ENCODE measurements at regions of chr3 and their contacts with region 1.

Region 1: DNA sequence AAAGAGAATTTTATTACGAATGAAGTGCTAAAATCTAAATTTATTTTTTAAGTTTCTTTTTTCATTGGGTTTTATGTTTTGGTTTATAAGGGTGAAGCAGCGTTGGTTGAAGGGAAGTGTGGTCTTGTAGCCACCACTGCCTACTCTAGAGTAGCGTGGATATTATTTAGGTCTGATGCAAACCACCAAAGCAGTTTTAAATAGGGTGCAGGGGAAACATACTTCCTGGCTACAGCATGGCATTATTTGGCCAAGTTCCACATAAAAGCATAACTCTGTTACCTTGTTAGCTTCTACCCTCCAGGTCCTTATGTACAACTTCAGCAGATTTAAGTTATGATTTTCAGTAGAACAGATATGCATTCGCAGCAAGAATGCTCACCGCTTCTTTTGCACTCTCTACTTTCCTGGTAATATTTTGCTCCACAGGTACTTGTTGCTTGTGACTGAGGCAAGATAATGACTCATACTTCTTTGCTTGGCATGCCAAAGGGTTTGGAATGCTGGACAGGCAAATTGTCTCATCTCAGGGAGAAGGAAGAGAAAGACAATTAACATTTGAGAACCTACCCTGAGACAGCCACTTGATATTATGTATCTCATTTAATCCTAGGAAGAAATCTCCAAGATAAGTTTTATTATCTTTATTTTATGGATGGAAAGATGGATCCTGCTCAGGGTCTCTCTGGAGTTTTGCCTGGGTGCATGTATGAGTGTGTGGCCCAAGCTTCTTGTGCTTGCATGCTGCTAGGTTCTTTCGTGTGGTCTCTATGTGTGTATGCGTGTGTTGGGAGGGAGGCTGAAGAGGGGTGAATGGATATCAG is 5.4 kb downstream of the TGFBR2 start:
- DNase-seq: no peak
- ATAC-seq: peak; percentile 49
- H3K4me3 ChIP-seq: peak overlapping the region; percentile 92
- H3K4me3 Mint-ChIP-seq: peak overlapping the region; percentile 88 to 100 (median 95)
- H3K27ac ChIP-seq: peak overlapping the region; percentile 79
- H3K27ac Mint-ChIP-seq: peak overlapping the region; percentile 87 to 99 (median 95)
- H3K4me1 ChIP-seq: peaks cover 30 to 65% of the 10 kb centered on the region in 2 donors
- H3K4me1 Mint-ChIP-seq: peaks cover 60 to 75% (median 63%) of the 10 kb centered on the region in 7 donors
- H3K27me3 ChIP-seq: no peaks in the 10 kb centered on the region
- H3K27me3 Mint-ChIP-seq: no peaks in the 10 kb centered on the region

Region 2: GRCh38 chr3:30042274-30042859 is 569.5 kb before region 1 on chr3:
- CTCF ChIA-PET with region 1: no interaction called
- POLR2A ChIA-PET with region 1: no interaction called
- intact Hi-C with region 1: loop called in 1 of 2 experiments (anchors 5 kb)
- DNase-seq: peak in 8 of 9 donors; percentile 25 to 73 (median 63)
- ATAC-seq: peak; percentile 68
- H3K4me3 ChIP-seq: no peak overlapping the region
- H3K4me3 Mint-ChIP-seq: no peak overlapping the region
- H3K27ac ChIP-seq: no peak overlapping the region
- H3K27ac Mint-ChIP-seq: no peak overlapping the region
- H3K4me1 ChIP-seq: no peaks in the 10 kb centered on the region
- H3K4me1 Mint-ChIP-seq: peaks cover 0 to 7% (median 4%) of the 10 kb centered on the region in 7 donors
- H3K27me3 ChIP-seq: no peaks in the 10 kb centered on the region
- H3K27me3 Mint-ChIP-seq: peaks cover 17 to 34% (median 28%) of the 10 kb centered on the region in 5 donors

Region 3: DNA sequence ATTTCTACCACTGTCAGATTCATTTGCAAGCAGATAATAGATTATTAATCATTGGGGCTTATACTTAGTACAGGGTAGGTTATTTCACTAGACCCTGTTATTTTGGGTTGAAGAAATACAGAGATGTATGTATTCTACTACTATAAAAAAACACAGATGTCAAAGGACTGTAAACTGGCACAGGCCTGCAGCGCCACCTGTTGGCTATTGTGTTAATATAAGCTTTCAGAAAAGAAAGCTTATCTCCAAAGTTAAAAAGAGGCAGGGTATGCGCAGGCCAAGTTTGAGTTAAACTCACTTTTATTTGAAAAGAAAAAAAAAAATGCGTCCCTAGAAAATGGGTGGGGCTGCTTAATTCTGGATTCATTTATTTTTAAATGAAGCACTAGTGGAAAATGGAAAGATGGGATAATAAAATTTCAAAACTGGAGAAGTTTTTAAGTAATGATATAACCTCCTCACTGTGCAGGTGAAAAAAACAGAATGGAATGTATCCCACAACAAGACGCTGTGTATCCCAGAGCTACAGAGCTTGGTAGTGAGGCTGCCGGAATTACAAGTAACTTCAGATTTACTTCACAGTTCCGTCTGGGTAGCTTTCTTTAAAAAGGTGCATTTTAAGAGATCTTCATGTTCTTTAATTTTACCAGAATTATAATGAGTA is 412.6 kb before region 1 on chr3:
- CTCF ChIA-PET with region 1: interaction called, 3 read pairs
- POLR2A ChIA-PET with region 1: no interaction called
- intact Hi-C with region 1: loop called in 1 of 2 experiments (anchors 5 kb)
- DNase-seq: peak; percentile 25 to 66 (median 58)
- ATAC-seq: peak; percentile 61
- H3K4me3 ChIP-seq: no peak overlapping the region
- H3K4me3 Mint-ChIP-seq: no peak overlapping the region
- H3K27ac ChIP-seq: no peak overlapping the region
- H3K27ac Mint-ChIP-seq: no peak overlapping the region
- H3K4me1 ChIP-seq: no peaks in the 10 kb centered on the region
- H3K4me1 Mint-ChIP-seq: peaks cover 0 to 7% (median 4%) of the 10 kb centered on the region in 7 donors
- H3K27me3 ChIP-seq: no peaks in the 10 kb centered on the region
- H3K27me3 Mint-ChIP-seq: peaks cover 0 to 6% (median 0%) of the 10 kb centered on the region in 5 donors

Region 4: DNA sequence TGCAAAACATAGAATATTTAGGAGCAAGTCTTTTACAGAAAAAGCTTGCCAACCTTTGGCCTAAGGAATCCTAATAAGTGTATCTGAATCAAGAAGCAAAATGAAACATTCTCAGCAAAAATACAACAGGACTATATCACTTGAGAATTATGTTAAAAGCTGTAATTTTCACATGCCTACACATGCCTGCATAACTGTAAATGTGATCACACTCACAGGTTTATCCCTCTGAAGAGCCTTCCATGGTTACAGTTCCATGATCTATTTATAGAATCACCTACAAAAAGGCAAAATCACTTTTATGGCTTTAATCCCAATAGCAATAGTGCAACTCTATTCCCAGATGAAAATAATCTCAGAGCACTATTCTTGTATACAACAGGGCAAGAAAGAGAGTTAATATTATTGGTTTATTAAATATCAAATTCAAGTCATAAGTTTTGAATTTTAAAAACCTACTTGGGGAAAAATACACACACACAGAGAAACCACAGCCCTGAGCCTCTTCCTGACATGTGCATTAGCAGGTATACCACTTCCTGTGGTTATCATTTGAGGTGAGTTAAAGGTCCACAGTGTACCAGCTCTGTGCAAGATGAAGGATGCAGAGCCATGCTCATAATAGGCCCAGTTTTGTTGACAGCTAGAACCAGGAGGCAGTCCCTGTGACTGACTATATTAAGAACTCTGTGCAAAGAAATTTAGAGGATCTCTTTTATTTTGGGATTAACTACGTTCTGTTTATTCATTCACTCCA is 257.9 kb before region 1 on chr3:
- CTCF ChIA-PET with region 1: no interaction called
- POLR2A ChIA-PET with region 1: interaction called, 12 read pairs
- intact Hi-C with region 1: loop called (anchors 2 kb)
- DNase-seq: peak; percentile 5 to 94 (median 87)
- ATAC-seq: peak; percentile 99
- H3K4me3 ChIP-seq: peak overlapping the region; percentile 36
- H3K4me3 Mint-ChIP-seq: peak overlapping the region; percentile 65 to 81 (median 68)
- H3K27ac ChIP-seq: no peak overlapping the region
- H3K27ac Mint-ChIP-seq: peak overlapping the region; percentile 23 to 96 (median 90)
- H3K4me1 ChIP-seq: peaks cover 38 to 66% of the 10 kb centered on the region in 2 donors
- H3K4me1 Mint-ChIP-seq: peaks cover 50 to 96% (median 88%) of the 10 kb centered on the region in 7 donors
- H3K27me3 ChIP-seq: no peaks in the 10 kb centered on the region
- H3K27me3 Mint-ChIP-seq: peaks cover 0 to 50% (median 0%) of the 10 kb centered on the region in 5 donors

Region 5: GRCh38 chr3:30586096-30586805 is 25.6 kb before region 1 on chr3:
- CTCF ChIA-PET with region 1: no interaction called
- POLR2A ChIA-PET with region 1: no interaction called
- intact Hi-C with region 1: no loop called
- DNase-seq: no peak
- ATAC-seq: no peak
- H3K4me3 ChIP-seq: no peak overlapping the region
- H3K4me3 Mint-ChIP-seq: no peak overlapping the region
- H3K27ac ChIP-seq: no peak overlapping the region
- H3K27ac Mint-ChIP-seq: no peak overlapping the region
- H3K4me1 ChIP-seq: no peaks in the 10 kb centered on the region
- H3K4me1 Mint-ChIP-seq: peaks cover 0 to 14% (median 3%) of the 10 kb centered on the region in 7 donors
- H3K27me3 ChIP-seq: no peaks in the 10 kb centered on the region
- H3K27me3 Mint-ChIP-seq: no peaks in the 10 kb centered on the region

Region 6: DNA sequence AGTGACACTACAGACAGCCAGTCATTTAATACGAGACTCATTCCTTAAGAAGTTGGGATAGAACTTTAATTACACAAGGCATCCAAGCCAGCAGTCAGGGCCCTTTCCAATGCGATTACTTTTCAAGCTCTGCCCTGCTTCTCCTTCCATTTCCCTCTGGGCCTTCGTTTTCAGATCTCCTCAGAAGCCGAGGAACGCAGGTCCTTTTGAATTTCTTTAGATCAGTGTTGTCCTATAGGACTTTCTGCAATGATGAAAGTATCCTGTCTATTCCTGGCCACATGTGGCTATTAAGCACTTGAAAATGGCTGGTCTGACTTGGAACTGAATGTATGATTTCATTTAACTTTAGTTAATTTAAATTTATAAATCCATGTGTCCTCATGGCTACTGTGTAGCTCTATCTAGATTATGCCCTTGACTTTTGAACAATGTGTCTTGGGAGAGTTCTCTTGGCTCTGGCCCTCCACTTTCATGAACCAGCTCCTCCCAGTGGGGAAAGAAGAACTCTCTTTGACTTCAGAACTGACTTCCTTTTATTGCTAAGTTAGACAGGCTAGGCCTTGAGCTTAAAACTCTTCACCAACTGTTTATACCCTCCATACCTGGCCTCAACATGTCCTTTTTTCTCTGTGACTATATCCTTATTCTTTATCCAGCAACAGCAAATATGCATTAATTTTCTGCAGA is 17.2 kb after region 1 on chr3:
- CTCF ChIA-PET with region 1: interaction called, 6 read pairs
- POLR2A ChIA-PET with region 1: interaction called, 853 read pairs
- intact Hi-C with region 1: loop called (anchors 1 kb)
- DNase-seq: peak in 2 of 9 donors; percentile 53 to 55
- ATAC-seq: peak; percentile 51
- H3K4me3 ChIP-seq: peak overlapping the region; percentile 29
- H3K4me3 Mint-ChIP-seq: peak overlapping the region; percentile 53 to 88 (median 72)
- H3K27ac ChIP-seq: peak overlapping the region; percentile 68
- H3K27ac Mint-ChIP-seq: peak overlapping the region; percentile 84 to 98 (median 96)
- H3K4me1 ChIP-seq: peaks cover 81 to 97% of the 10 kb centered on the region in 2 donors
- H3K4me1 Mint-ChIP-seq: peaks cover 64 to 100% (median 93%) of the 10 kb centered on the region in 7 donors
- H3K27me3 ChIP-seq: no peaks in the 10 kb centered on the region
- H3K27me3 Mint-ChIP-seq: no peaks in the 10 kb centered on the region

Region 7: GRCh38 chr3:30672959-30673358 is 61.1 kb after region 1 on chr3:
- CTCF ChIA-PET with region 1: no interaction called
- POLR2A ChIA-PET with region 1: interaction called, 43 read pairs
- intact Hi-C with region 1: no loop called
- DNase-seq: no peak
- ATAC-seq: no peak
- H3K4me3 ChIP-seq: peak overlapping the region; percentile 15
- H3K4me3 Mint-ChIP-seq: peak overlapping the region; percentile 69 to 93 (median 80)
- H3K27ac ChIP-seq: peak overlapping the region; percentile 59
- H3K27ac Mint-ChIP-seq: peak overlapping the region; percentile 74 to 99 (median 95)
- H3K4me1 ChIP-seq: peaks cover 19 to 85% of the 10 kb centered on the region in 2 donors
- H3K4me1 Mint-ChIP-seq: peaks cover 74 to 100% (median 99%) of the 10 kb centered on the region in 7 donors
- H3K27me3 ChIP-seq: no peaks in the 10 kb centered on the region
- H3K27me3 Mint-ChIP-seq: no peaks in the 10 kb centered on the region

Region 8: GRCh38 chr3:30970183-30970582 is 358.4 kb after region 1 on chr3:
- CTCF ChIA-PET with region 1: no interaction called
- POLR2A ChIA-PET with region 1: no interaction called
- intact Hi-C with region 1: no loop called
- DNase-seq: peak in 4 of 9 donors; percentile 2 to 23 (median 8)
- ATAC-seq: no peak
- H3K4me3 ChIP-seq: no peak overlapping the region
- H3K4me3 Mint-ChIP-seq: no peak overlapping the region
- H3K27ac ChIP-seq: no peak overlapping the region
- H3K27ac Mint-ChIP-seq: no peak overlapping the region
- H3K4me1 ChIP-seq: no peaks in the 10 kb centered on the region
- H3K4me1 Mint-ChIP-seq: peaks cover 0 to 5% (median 0%) of the 10 kb centered on the region in 7 donors
- H3K27me3 ChIP-seq: no peaks in the 10 kb centered on the region
- H3K27me3 Mint-ChIP-seq: peaks cover 3 to 16% (median 9%) of the 10 kb centered on the region in 5 donors

Region 9: GRCh38 chr3:31462050-31462569 is 850.3 kb after region 1 on chr3:
- CTCF ChIA-PET with region 1: no interaction called
- POLR2A ChIA-PET with region 1: no interaction called
- intact Hi-C with region 1: loop called in 1 of 2 experiments (anchors 10 kb)
- DNase-seq: peak in 7 of 9 donors; percentile 78 to 93 (median 86)
- ATAC-seq: peak; percentile 93
- H3K4me3 ChIP-seq: peak overlapping the region; percentile 49
- H3K4me3 Mint-ChIP-seq: peak overlapping the region; percentile 28 to 95 (median 78)
- H3K27ac ChIP-seq: peak overlapping the region; percentile 68
- H3K27ac Mint-ChIP-seq: peak overlapping the region; percentile 70 to 100 (median 96)
- H3K4me1 ChIP-seq: peaks cover 49 to 59% of the 10 kb centered on the region in 2 donors
- H3K4me1 Mint-ChIP-seq: peaks cover 14 to 79% (median 68%) of the 10 kb centered on the region in 7 donors
- H3K27me3 ChIP-seq: no peaks in the 10 kb centered on the region
- H3K27me3 Mint-ChIP-seq: no peaks in the 10 kb centered on the region

Measured in naive thymus-derived CD4-positive, alpha-beta T cell (primary cell).